ENCODE measurements at regions of chr6 and their contacts with region 1.

Region 1: GRCh38 chr6:11585426-11586016 is 48.0 kb downstream of the TMEM170B start:
- DNase-seq: no peak
- H3K4me3 ChIP-seq: no peak overlapping the region
- H3K27ac ChIP-seq: no peak overlapping the region
- H3K4me1 ChIP-seq: no peaks in the 10 kb centered on the region
- H3K27me3 ChIP-seq: no peaks in the 10 kb centered on the region
- CTCF ChIP-seq: peak in 2 of 3 donors; percentile 45 to 61
- POLR2A ChIP-seq: no peak

Region 2: GRCh38 chr6:13360671-13361550 is 1775.4 kb after region 1 on chr6:
- intact Hi-C with region 1: loop called (anchors 10 kb)
- DNase-seq: no peak
- H3K4me3 ChIP-seq: no peak overlapping the region
- H3K27ac ChIP-seq: peak overlapping the region in 1 of 2 donors; percentile 4
- H3K4me1 ChIP-seq: no peaks in the 10 kb centered on the region
- H3K27me3 ChIP-seq: no peaks in the 10 kb centered on the region
- CTCF ChIP-seq: no peak
- POLR2A ChIP-seq: no peak

Measured in breast epithelium (tissue), 4 donors.